Activated B cell treated with CpG ODN at 0.5 μM for 24 hours (primary cell): ENCODE measurements at regions of chr19 and their contacts with region 1.

Region 1: GRCh38 chr19:2950286-2951124 is 5.7 kb upstream of the ZNF77 start:
- DNase-seq: peak; percentile 99
- ATAC-seq: peak; percentile 93
- H3K4me3 Mint-ChIP-seq: peak overlapping the region; percentile 98
- H3K27ac Mint-ChIP-seq: peak overlapping the region; percentile 98
- H3K4me1 Mint-ChIP-seq: peaks cover 20% of the 10 kb centered on the region
- H3K27me3 Mint-ChIP-seq: no peaks in the 10 kb centered on the region
- CTCF ChIP-seq: no peak

Region 2: GRCh38 chr19:2782936-2783780 is 167.3 kb before region 1 on chr19 and contains the start of gene SGTA:
- CTCF ChIA-PET with region 1: no interaction called
- POLR2A ChIA-PET with region 1: interaction called, 3 read pairs
- intact Hi-C with region 1: loop called (anchors 1 kb)
- DNase-seq: peak; percentile 90
- ATAC-seq: peak; percentile 65
- H3K4me3 Mint-ChIP-seq: peak within 1 kb of the TSS; percentile 86
- H3K27ac Mint-ChIP-seq: peak within 1 kb of the TSS; percentile 90
- H3K4me1 Mint-ChIP-seq: peaks cover 76% of the 10 kb centered on the region
- H3K27me3 Mint-ChIP-seq: no peaks in the 10 kb centered on the region
- CTCF ChIP-seq: no peak
- total RNA-seq, gene SGTA: 45.6 and 47.3 TPM in 2 replicates

Region 3: DNA sequence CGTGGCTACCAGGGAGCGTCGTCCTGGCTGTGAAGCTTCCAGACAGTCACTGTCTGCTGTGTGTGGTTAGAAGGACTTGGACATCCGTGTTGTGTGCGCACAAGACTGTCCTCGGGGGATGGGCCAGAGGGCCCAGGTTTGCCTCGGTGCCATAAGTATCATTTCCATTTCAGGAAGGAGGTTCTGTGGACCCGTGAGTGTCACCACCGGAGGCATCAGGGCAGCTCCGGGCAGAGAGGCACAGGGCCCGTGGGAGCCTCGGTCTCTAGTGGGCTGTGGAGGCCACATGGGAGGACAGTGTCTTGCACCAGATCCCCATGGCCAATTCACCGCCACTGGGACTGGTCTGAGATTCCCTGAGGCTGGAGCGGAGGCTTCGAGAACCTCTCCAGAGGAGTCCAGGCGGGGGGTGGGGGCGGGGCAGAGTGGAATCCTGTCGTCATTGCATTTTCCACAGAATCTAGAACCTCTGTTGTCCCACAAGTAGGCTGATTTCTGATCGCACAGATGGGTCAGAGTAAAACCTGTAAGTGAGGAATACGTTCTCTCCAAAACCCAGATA is 43.8 kb before region 1 on chr19:
- CTCF ChIA-PET with region 1: no interaction called
- POLR2A ChIA-PET with region 1: no interaction called
- intact Hi-C with region 1: no loop called
- DNase-seq: no peak
- ATAC-seq: no peak
- H3K4me3 Mint-ChIP-seq: no peak overlapping the region
- H3K27ac Mint-ChIP-seq: no peak overlapping the region
- H3K4me1 Mint-ChIP-seq: peaks cover 7% of the 10 kb centered on the region
- H3K27me3 Mint-ChIP-seq: no peaks in the 10 kb centered on the region
- CTCF ChIP-seq: no peak

Region 4: DNA sequence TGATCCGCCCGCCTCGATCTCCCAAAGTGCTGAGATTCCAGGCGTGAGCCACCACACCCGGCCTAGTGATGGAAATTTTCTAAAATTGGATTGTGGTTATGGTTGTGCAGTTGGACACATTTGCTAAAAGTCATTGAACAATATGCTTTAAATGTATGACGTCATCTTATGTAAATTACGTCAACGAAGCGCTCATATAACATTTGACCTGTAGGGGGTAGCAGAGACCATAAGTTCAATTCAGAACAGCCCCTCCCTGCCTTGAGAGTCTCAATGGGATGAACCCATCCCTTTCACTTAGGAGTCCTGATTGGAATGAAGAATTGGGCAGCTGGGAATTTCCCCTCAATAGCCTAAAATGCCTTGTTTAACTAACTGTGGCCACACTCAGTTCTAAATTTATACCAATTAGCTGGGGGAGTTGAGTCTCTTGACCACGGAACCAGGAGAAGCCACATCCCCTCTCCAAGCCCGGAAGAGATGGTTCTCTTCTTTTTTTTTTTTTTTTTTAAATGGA is 11.6 kb after region 1 on chr19:
- CTCF ChIA-PET with region 1: interaction called, 18 read pairs
- POLR2A ChIA-PET with region 1: interaction called, 9 read pairs
- intact Hi-C with region 1: no loop called
- DNase-seq: no peak
- ATAC-seq: peak; percentile 84
- H3K4me3 Mint-ChIP-seq: peak overlapping the region; percentile 46
- H3K27ac Mint-ChIP-seq: no peak overlapping the region
- H3K4me1 Mint-ChIP-seq: peaks cover 18% of the 10 kb centered on the region
- H3K27me3 Mint-ChIP-seq: no peaks in the 10 kb centered on the region
- CTCF ChIP-seq: peak; percentile 20

Region 5: GRCh38 chr19:3062168-3063102 is 111.9 kb after region 1 on chr19 and contains the start of gene TLE5:
- CTCF ChIA-PET with region 1: no interaction called
- POLR2A ChIA-PET with region 1: interaction called, 4 read pairs
- intact Hi-C with region 1: loop called (anchors 5 kb)
- DNase-seq: peak; percentile 76
- ATAC-seq: peak; percentile 43
- H3K4me3 Mint-ChIP-seq: peak within 1 kb of the TSS; percentile 84
- H3K27ac Mint-ChIP-seq: peak within 1 kb of the TSS; percentile 89
- H3K4me1 Mint-ChIP-seq: peaks cover 65% of the 10 kb centered on the region
- H3K27me3 Mint-ChIP-seq: no peaks in the 10 kb centered on the region
- CTCF ChIP-seq: no peak
- total RNA-seq, gene TLE5: 323 TPM in 2 replicates

Region 6: GRCh38 chr19:3185482-3186376 is 235.2 kb after region 1 on chr19 and contains the start of gene NCLN:
- CTCF ChIA-PET with region 1: interaction called, 3 read pairs
- POLR2A ChIA-PET with region 1: interaction called, 25 read pairs
- intact Hi-C with region 1: loop called (anchors 1 kb)
- DNase-seq: peak; percentile 98
- ATAC-seq: peak; percentile 86
- H3K4me3 Mint-ChIP-seq: peak within 1 kb of the TSS; percentile 93
- H3K27ac Mint-ChIP-seq: peak within 1 kb of the TSS; percentile 95
- H3K4me1 Mint-ChIP-seq: peaks cover 74% of the 10 kb centered on the region
- H3K27me3 Mint-ChIP-seq: no peaks in the 10 kb centered on the region
- CTCF ChIP-seq: no peak
- total RNA-seq, gene NCLN: 61.1 and 64.8 TPM in 2 replicates

Region 7: DNA sequence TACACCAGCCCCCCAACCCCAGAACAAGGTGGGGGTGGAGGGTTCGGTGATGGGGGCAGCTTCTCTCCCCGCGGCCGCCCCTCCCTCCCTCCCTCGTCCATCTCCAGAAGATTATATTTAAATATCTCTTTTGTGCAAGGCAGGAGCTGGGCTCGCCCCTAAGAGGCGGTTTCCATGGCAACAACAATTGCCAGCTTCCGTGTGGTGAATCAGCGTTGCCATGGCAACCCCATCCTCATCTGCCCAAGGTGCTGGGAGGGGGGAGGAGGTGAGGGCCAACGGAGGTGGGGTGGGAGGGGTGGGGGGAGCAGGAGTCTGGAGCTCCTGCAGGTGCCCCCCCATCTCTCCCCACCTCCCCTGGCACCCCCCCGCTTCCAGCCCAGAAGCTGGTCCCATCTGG is 320.4 kb after region 1 on chr19:
- CTCF ChIA-PET with region 1: no interaction called
- POLR2A ChIA-PET with region 1: no interaction called
- intact Hi-C with region 1: no loop called
- DNase-seq: no peak
- ATAC-seq: no peak
- H3K4me3 Mint-ChIP-seq: no peak overlapping the region
- H3K27ac Mint-ChIP-seq: no peak overlapping the region
- H3K4me1 Mint-ChIP-seq: peaks cover 11% of the 10 kb centered on the region
- H3K27me3 Mint-ChIP-seq: peaks cover 60% of the 10 kb centered on the region
- CTCF ChIP-seq: no peak

Region 8: GRCh38 chr19:3505598-3506383 is 555.3 kb after region 1 on chr19 and contains the start of gene FZR1:
- CTCF ChIA-PET with region 1: no interaction called
- POLR2A ChIA-PET with region 1: interaction called, 4 read pairs
- intact Hi-C with region 1: loop called (anchors 10 kb)
- DNase-seq: peak; percentile 98
- ATAC-seq: peak; percentile 91
- H3K4me3 Mint-ChIP-seq: peak within 1 kb of the TSS; percentile 91
- H3K27ac Mint-ChIP-seq: peak within 1 kb of the TSS; percentile 96
- H3K4me1 Mint-ChIP-seq: peaks cover 47% of the 10 kb centered on the region
- H3K27me3 Mint-ChIP-seq: no peaks in the 10 kb centered on the region
- CTCF ChIP-seq: no peak
- total RNA-seq, gene FZR1: 53.5 and 66.0 TPM in 2 replicates